PC-9 (cell line): ENCODE measurements at regions of chr5 and their contacts with region 1.

Region 1: GRCh38 chr5:146426853-146427618 is 20.1 kb upstream of the TCERG1 start:
- DNase-seq: peak in 1 of 2 experiments; percentile 39
- H3K4me3 ChIP-seq: no peak overlapping the region
- H3K27ac ChIP-seq: no peak overlapping the region
- H3K4me1 ChIP-seq: no peaks in the 10 kb centered on the region
- H3K27me3 ChIP-seq: no peaks in the 10 kb centered on the region
- CTCF ChIP-seq: peak; percentile 75

Region 2: DNA sequence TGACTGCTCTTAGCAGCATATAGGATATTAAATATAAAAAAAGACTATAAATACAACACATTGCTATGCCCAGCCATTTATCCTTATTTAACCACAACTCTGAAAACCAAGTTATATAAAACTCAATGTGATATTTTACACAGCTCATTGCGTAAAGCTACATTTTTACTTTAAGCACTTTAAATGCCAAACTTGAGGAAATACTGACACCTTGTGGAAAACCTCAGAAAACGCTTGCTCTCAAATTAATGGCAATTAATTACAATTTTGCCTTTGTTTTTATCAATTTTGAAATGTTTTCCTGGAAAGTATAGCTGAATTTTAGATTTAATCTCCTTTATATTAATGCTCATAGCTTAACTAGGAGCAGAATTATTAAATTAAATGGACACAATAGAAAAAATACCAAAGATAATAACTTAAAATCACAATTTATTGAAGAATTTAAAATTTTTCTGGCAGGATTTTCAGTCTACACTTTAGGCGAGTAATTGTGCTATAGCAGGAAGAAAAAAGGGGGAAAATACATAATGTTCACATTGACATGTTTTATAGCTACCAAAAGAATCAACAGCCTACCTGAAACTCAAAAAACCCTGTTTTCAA is 296.5 kb before region 1 on chr5:
- CTCF ChIA-PET with region 1: no interaction called
- POLR2A ChIA-PET with region 1: no interaction called
- intact Hi-C with region 1: loop called (anchors 5 kb)
- DNase-seq: no peak
- H3K4me3 ChIP-seq: no peak overlapping the region
- H3K27ac ChIP-seq: no peak overlapping the region
- H3K4me1 ChIP-seq: no peaks in the 10 kb centered on the region
- H3K27me3 ChIP-seq: no peaks in the 10 kb centered on the region
- CTCF ChIP-seq: peak; percentile 85

Region 3: DNA sequence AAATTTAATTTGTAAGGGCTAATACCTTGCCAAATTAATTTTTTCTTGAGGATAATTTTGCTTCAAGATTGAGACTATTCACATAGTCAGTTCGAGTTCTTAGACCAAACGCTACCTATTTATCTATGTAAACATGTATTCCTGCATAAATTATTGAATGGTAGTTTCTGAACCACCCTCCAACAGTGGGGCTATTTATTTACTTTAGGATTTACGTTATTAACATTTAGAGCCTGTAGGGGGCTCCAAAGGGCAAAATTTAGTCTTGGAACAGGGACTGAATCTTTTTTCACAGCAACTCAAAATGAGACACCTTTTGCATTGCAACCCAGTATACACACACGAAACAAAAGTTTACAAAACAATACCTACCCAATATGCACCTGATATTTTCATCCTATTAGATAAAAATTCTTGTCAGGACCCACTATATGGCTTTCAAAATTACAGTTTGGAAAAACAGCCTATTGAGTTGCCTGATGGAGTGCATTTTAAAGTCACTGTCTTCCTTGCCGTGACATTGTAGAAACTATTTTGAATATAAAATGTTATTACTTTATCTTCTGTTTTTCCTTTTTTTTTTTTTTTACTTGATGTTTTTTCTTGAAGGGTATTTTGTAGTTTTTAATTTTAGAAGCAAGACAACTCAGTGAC is 135.5 kb before region 1 on chr5:
- CTCF ChIA-PET with region 1: no interaction called
- POLR2A ChIA-PET with region 1: no interaction called
- intact Hi-C with region 1: loop called (anchors 1 kb)
- DNase-seq: no peak
- H3K4me3 ChIP-seq: no peak overlapping the region
- H3K27ac ChIP-seq: no peak overlapping the region
- H3K4me1 ChIP-seq: peaks cover 25% of the 10 kb centered on the region
- H3K27me3 ChIP-seq: no peaks in the 10 kb centered on the region
- CTCF ChIP-seq: peak; percentile 75

Region 4: GRCh38 chr5:146378986-146379385 is 48.0 kb before region 1 on chr5:
- CTCF ChIA-PET with region 1: no interaction called
- POLR2A ChIA-PET with region 1: no interaction called
- intact Hi-C with region 1: no loop called
- DNase-seq: no peak
- H3K4me3 ChIP-seq: no peak overlapping the region
- H3K27ac ChIP-seq: no peak overlapping the region
- H3K4me1 ChIP-seq: no peaks in the 10 kb centered on the region
- H3K27me3 ChIP-seq: peaks cover 21% of the 10 kb centered on the region; the same call in 1 of the 2 replicates
- CTCF ChIP-seq: no peak